Activated T-helper 2 cell treated with anti-CD3 and anti-CD28 coated beads, Interferon-gamma antibody, Interleukin-2, Interleukin-4, amounts not matched to agents 10 μg/mL and 5 μg/mL and 100 μg/mL, durations not matched to agents 14 hours and 24 hours and 36 hours (primary cell): ENCODE measurements at regions of chr1 and their contacts with region 1.

Region 1: DNA sequence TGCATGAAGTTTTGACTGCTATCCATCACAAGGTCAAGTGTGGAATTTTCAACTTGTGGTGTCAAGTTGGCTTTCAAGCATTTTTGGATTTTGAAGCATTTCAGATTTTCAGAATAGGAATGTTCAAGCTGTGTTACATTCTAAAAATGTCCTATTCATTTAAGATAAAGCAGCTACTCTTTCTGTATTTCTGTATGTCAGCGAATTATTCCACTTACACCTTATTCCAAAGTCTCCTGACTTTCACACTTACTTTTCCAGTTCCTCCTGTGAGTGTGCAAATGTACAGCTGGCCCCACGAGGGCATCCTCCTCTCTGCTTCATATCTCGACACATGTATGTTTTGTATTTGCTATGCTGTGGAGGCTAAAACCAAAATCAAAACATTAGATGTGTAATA is 51.9 kb downstream of the RC3H1 start:
- DNase-seq: no peak
- H3K4me3 Mint-ChIP-seq: no peak overlapping the region
- H3K27ac Mint-ChIP-seq: no peak overlapping the region
- H3K4me1 Mint-ChIP-seq: peaks cover 11% of the 10 kb centered on the region
- H3K27me3 Mint-ChIP-seq: no peaks in the 10 kb centered on the region

Region 2: DNA sequence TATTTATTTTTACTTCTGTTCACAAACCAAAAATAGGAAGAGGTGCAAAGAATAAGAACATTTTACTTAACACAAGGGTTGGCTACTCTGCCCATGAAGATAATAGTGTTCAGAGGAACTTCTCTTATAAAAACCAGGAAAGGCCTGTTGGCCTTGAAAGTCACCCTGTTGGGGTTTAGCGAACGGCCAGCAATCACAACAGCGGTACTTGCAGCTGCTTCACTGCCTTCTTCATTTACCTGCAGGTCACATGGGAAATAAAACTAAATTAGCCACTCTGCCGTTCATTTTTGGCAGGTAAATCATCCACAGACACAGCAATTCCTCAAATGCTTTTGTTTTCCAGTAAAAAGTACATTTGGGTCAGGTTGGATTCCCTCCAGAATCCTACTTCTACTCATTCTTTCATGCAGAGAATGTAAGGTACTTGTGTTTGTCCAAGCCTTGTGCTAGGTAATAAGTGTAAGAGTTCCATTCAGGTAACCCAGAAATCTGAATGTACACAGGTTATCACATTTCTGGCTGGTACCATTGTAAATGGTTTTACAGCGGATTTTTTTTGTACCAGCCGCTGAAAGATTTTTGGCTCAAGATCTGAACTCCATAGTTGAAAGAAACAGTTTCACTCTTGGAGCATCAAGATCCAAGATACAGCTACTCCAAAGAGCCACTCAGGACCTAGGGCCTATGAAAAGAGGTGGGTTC is 66.3 kb before region 1 on chr1:
- intact Hi-C with region 1: no loop called
- DNase-seq: no peak
- H3K4me3 Mint-ChIP-seq: no peak overlapping the region
- H3K27ac Mint-ChIP-seq: no peak overlapping the region
- H3K4me1 Mint-ChIP-seq: peaks cover 7% of the 10 kb centered on the region
- H3K27me3 Mint-ChIP-seq: no peaks in the 10 kb centered on the region

Region 3: DNA sequence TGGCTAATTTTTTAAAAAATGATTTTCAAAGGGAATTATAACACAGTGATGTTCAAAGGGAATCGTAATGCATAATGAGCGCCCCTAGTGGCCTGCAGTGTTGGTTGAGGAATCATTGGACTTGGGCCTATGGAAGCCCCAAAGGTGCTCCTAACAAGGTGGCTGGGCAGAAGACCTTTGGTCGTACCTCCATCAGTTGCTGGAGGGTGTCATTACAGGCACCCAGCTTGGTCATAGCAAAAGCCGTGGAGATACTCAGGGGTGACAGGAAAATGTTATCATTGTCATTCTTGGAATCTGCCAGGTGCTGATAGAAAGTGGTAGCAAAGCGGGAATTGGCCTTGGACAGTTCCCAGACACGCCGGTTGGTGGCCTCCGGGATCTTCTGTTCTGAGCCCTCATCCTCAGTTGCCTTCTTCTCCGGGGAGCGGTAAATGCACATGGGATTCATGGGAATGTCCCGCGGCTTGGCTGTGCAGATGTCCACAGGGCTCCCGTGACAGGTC is 55.8 kb before region 1 on chr1:
- intact Hi-C with region 1: no loop called
- DNase-seq: no peak
- H3K4me3 Mint-ChIP-seq: no peak overlapping the region
- H3K27ac Mint-ChIP-seq: no peak overlapping the region
- H3K4me1 Mint-ChIP-seq: no peaks in the 10 kb centered on the region
- H3K27me3 Mint-ChIP-seq: no peaks in the 10 kb centered on the region

Region 4: DNA sequence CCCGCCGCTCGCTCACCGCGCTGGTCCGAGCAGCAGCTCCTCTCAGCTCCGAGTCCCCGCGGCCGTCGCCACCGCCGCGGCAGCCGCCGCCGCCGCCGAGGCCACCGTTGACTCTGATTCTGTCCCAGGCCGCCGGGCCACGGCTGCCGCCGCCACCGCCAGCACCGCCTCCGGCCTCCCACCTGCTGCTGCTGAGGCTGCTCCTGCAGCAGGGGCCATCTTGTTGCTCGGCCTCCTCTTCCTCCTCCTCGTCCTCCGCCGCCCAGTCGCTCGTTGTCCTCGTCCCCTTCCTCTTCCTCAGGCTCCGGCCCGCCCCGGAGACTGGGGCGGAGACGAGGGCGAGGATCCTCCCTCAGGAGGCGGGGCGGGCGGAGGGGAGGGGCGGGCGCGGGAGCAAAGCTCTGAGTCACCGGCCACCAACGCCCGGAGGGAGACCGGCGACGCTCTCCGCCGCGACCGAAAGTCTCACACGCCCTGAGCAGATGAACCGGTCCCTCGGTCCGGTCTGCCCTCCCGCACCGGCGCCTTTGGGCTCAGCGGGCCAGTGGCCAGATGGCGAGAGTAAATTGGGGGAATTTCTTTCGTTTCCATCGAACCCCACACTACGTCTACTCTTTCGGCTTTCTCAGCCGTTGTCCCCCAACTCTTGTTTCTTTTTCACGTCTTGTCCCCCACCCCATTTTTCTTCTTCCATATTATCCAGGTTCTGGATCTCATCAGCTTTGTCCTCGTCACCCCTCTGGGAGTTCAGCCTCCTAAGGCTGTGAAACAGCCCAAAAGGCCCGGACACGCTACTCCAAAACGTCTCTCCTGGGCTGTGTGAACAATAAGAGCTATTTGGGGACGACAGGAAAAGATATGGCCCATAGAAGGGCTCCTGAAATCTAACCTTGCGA is 52.1 kb after region 1 on chr1 and contains the start of gene RC3H1:
- intact Hi-C with region 1: loop called (anchors 10 kb)
- DNase-seq: peak; percentile 85
- H3K4me3 Mint-ChIP-seq: peak within 1 kb of the TSS; percentile 99
- H3K27ac Mint-ChIP-seq: peak within 1 kb of the TSS; percentile 90
- H3K4me1 Mint-ChIP-seq: peaks cover 35% of the 10 kb centered on the region
- H3K27me3 Mint-ChIP-seq: peaks cover 2% of the 10 kb centered on the region
- total RNA-seq, gene RC3H1: 30.4 and 33.5 TPM in 2 replicates